H1 (cell line): ENCODE measurements at regions of chr5 and their contacts with region 1.

Region 1: DNA sequence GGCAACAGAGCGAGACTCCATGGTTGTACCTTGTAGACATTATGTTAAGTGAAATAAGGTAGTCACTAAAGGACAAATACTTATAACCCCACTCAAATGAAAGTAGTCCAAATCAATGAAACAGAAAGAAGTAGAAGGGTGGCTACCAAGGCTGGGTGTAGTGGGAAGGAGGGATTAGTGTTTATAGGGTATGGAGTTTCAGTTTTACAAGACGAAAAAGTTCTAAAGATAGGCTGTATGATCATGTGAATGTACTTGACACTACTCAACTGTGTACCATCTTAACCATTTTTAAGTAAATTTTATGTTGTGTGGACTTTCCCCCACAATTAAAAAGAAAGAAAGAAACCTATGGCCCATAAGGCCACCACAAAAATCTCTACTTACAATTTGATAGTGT is 32.2 kb downstream of the ALDH7A1 start:
- DNase-seq: no peak
- H3K4me3 ChIP-seq: no peak overlapping the region
- H3K27ac ChIP-seq: no peak overlapping the region
- H3K4me1 ChIP-seq: no peaks in the 10 kb centered on the region
- H3K27me3 ChIP-seq: no peaks in the 10 kb centered on the region
- CTCF ChIP-seq: no peak
- EP300 ChIP-seq: no peak
- POLR2A ChIP-seq: no peak
- RAD21 ChIP-seq: no peak

Region 2: DNA sequence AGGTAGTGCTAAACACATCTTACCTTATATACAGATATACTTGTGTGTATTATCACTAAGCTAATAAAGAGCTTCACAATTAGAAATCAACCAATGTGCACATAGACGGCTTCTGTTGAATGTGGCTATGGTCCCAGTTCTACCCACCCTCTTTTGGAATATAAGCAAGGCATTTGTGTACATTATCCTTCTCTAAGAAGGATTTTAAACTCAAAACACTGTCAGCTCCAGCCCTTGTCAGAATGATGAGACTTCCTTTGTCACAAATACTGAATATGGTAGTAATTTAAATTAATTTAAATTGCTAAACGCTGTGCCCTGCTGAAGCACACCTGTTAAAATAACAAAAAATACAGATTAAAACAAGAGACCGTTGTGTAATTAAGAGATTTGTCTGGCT is 247.5 kb before region 1 on chr5:
- CTCF ChIA-PET with region 1: no interaction called
- POLR2A ChIA-PET with region 1: no interaction called
- DNase-seq: no peak
- H3K4me3 ChIP-seq: no peak overlapping the region
- H3K27ac ChIP-seq: no peak overlapping the region
- H3K4me1 ChIP-seq: no peaks in the 10 kb centered on the region
- H3K27me3 ChIP-seq: no peaks in the 10 kb centered on the region; a peak in 1 of 7 replicates
- CTCF ChIP-seq: no peak
- EP300 ChIP-seq: no peak
- POLR2A ChIP-seq: no peak
- RAD21 ChIP-seq: no peak

Region 3: DNA sequence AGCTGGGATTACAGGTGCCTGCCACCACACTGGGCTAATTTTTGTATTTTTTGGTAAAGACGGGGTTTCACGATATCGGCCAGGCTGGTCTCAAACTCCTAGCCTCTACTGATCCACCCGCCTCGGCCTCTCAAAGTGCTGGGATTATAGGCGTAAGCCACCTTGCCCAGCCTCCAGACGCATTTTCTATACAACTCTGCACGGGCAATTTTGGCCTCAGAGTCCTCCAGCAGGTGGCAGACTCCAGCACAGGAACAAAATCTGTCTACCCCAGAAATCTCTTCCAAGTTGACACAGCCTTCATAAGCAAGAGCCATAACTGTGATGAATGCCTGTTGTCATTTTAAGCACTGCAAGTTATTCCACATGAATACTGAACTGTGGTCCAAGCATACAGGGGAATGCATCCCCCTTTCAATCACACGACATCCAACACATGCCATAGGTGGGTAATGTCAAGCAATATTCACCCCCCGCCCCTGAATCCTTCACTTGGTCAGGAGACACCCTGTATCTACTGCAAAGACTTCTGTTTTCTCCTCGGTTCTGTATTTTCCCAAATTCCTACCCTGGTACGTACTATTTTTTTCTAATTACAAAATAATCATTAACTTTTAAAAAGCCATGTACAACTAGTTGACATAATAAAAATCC is 18.6 kb before region 1 on chr5:
- CTCF ChIA-PET with region 1: interaction called, 7 read pairs
- POLR2A ChIA-PET with region 1: interaction called, 10 read pairs
- DNase-seq: peak in 1 of 2 experiments; percentile 52
- H3K4me3 ChIP-seq: no peak overlapping the region
- H3K27ac ChIP-seq: no peak overlapping the region
- H3K4me1 ChIP-seq: no peaks in the 10 kb centered on the region
- H3K27me3 ChIP-seq: no peaks in the 10 kb centered on the region
- CTCF ChIP-seq: peak; percentile 45 to 64 (median 57)
- EP300 ChIP-seq: no peak
- POLR2A ChIP-seq: no peak
- RAD21 ChIP-seq: peak; percentile 45 to 52

Region 4: DNA sequence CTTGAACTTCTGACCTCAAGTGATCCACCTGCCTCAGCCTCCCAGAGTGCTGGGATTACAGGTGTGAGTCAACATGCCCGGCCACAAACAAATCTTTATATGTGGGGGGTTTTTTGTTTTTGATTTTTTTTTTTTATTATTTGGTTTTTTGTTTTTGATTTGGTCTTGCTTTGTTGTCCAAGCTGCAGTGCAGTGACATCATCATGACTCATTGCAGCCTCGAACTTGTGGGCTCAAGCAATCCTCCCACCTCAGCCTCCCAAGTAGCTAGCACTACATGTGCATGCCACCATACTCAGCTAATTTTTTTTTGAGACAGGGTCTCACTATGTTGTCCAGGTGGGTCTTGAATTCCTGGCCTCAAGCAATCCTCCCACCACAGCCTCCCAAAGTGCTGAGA is 10.2 kb before region 1 on chr5:
- CTCF ChIA-PET with region 1: no interaction called
- POLR2A ChIA-PET with region 1: interaction called, 10 read pairs
- DNase-seq: peak in 1 of 2 experiments; percentile 1
- H3K4me3 ChIP-seq: no peak overlapping the region
- H3K27ac ChIP-seq: no peak overlapping the region
- H3K4me1 ChIP-seq: no peaks in the 10 kb centered on the region
- H3K27me3 ChIP-seq: no peaks in the 10 kb centered on the region
- CTCF ChIP-seq: no peak
- EP300 ChIP-seq: no peak
- POLR2A ChIP-seq: no peak
- RAD21 ChIP-seq: no peak